Activated CD4-positive, alpha-beta T cell treated with anti-CD3 and anti-CD28 coated beads, Interleukin-2, amount 10 ng/mL, durations not matched to agents 24 days and 14 days (primary cell): ENCODE measurements at regions of chr11 and their contacts with region 1.

Region 1: DNA sequence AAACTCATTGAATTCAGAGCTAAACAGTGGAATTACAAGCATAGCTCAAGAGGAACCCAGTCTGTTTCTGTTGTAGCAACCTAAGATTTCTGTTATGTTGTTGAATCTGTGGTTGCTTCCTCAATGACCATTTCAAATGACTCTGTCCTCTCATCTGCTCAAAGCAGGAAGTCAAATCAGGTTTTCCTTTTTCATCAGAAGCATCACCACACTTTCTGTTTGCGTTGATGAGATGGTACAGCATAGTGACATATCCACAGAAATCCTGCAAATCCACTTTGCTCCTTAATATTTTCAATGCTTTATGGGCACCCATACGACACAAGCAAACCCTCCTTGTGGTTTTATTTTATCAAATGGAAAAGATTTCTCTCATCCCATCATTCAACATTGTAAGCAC is 12.6 kb upstream of the UCP2 start:
- DNase-seq: peak; percentile 86
- H3K4me3 Mint-ChIP-seq: peak overlapping the region; percentile 80
- H3K27ac Mint-ChIP-seq: peak overlapping the region; percentile 97
- H3K4me1 Mint-ChIP-seq: peaks cover 41% of the 10 kb centered on the region
- H3K27me3 Mint-ChIP-seq: no peaks in the 10 kb centered on the region

Region 2: DNA sequence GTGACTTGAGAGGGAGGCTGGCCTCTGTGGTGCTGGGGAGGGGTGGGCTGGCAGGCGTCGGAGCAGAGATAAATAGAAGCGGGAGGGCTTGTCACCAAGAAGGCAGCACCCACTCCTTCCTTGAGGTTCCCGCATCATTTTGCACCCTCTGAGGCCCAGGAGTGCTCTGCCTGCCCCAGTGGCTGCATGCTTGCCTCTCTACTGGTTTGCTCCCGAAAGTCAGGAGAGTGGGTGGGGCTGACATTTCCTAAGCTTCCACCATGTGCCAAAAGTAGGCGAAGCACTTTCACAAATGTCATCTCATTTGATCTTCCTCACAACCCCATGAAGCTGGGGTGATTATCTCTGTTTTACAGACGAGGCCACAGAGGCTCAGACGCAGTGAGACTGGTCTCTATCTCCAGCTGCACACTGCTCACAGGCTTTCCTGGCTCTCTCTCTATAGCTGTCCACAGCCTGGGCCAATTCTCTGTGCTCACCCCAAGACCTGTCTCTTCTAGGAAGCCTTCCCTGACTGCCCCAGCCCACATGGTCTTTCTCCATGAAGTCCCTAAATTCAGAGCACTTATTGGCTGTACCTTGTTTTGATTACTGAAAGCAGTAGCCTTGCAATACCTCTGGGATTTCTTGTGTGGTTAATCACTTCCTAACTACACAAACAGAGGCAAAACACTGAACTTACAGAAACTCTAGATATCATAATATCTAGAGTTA is 16.3 kb after region 1 on chr11:
- intact Hi-C with region 1: loop called (anchors 1 kb)
- DNase-seq: peak; percentile 89
- H3K4me3 Mint-ChIP-seq: peak overlapping the region; percentile 44
- H3K27ac Mint-ChIP-seq: peak overlapping the region; percentile 95
- H3K4me1 Mint-ChIP-seq: peaks cover 76% of the 10 kb centered on the region
- H3K27me3 Mint-ChIP-seq: no peaks in the 10 kb centered on the region

Region 3: DNA sequence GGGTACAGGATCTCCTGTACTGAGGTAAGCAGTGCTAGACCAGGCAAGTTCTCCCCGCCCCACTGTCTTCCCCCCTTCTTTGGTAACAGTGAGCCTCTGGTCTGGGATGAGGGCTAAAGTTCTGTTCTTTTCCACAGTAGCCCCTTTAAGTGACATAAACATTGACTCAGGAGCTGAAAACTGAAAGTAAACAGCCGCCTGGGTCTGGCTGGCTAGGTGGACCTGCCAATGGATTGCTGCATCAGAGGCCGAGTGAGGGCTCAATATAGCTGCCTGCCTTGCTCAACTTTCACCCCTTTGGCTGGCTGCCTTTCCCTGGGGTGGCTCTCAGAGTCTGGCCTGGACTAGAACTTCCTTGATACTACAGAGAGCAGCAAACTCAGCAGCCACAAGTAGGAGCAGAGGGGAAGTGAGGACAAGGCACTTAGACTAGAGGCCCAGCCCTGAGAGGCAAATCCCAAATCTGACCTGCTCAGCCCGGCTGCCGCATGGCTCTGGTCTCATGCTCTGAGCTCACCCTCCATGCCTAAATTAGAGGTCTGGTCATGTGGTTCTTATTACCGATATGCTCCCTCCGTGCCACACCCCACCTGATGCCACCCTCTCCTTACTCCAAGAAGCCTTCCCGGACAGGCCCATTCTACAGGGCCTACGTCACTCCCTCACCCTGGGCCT is 23.2 kb after region 1 on chr11:
- intact Hi-C with region 1: loop called (anchors 1 kb)
- DNase-seq: peak; percentile 58
- H3K4me3 Mint-ChIP-seq: peak overlapping the region; percentile 21
- H3K27ac Mint-ChIP-seq: no peak overlapping the region
- H3K4me1 Mint-ChIP-seq: peaks cover 42% of the 10 kb centered on the region
- H3K27me3 Mint-ChIP-seq: no peaks in the 10 kb centered on the region